Esophagus muscularis mucosa (tissue), 4 donors: ENCODE measurements at regions of chr3 and their contacts with region 1.

Region 1: DNA sequence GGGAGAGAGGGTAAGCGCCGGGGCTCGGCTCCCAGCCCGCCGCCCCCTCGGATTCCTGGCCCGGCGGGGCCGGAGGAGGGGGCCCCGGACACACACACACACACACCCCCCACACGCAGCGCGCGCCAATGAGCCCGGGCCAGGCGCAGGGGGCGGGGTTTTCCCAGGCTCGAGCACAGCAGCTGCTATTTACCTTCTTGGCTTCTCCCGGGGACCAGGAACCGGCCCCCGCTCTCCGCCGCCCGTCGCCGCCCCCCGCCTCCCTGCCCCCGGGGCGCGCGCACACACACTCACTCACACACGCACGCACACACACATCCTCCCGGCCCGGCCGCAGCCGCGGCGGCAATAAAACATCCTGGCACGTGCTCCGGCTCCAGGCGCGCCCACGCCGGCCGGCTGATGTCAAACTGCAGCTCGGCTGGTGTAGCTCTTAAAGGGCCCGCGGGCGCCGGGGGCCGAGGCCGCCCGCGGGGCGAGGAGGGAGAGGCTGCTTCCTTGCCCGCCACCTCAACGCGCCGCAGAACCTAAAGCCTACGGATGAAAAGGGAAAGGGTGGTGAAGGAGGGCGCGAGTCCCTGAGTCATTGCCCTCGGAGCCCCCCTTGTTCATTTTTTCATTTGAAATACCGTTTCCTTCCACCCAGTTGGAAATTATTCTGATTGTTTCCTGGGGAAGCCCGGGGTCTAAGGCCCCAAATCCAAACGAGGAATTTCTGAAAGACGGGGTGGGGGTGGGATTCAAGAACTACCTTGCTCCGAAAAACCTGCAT is 1.0 kb upstream of the HES1 start:
- DNase-seq: peak; percentile 97
- H3K4me3 ChIP-seq: peak overlapping the region; percentile 74 to 80 (median 76)
- H3K27ac ChIP-seq: peak overlapping the region; percentile 93 to 98 (median 96)
- H3K4me1 ChIP-seq: peaks cover 39 to 87% (median 74%) of the 10 kb centered on the region in 4 donors
- H3K27me3 ChIP-seq: no peaks in the 10 kb centered on the region
- CTCF ChIP-seq: no peak
- EP300 ChIP-seq: peak; percentile 26
- POLR2A ChIP-seq: peak; percentile 70

Region 2: GRCh38 chr3:193780810-193781472 is 354.0 kb before region 1 on chr3:
- intact Hi-C with region 1: loop called (anchors 2 kb)
- DNase-seq: no peak
- H3K4me3 ChIP-seq: no peak overlapping the region
- H3K27ac ChIP-seq: peak overlapping the region in 3 of 4 donors; percentile 34 to 49 (median 49)
- H3K4me1 ChIP-seq: peaks cover 8 to 15% (median 11%) of the 10 kb centered on the region in 4 donors
- H3K27me3 ChIP-seq: peaks cover 0 to 25% (median 0%) of the 10 kb centered on the region in 4 donors
- CTCF ChIP-seq: peak; percentile 79 to 86 (median 85)
- EP300 ChIP-seq: no peak
- POLR2A ChIP-seq: no peak

Region 3: DNA sequence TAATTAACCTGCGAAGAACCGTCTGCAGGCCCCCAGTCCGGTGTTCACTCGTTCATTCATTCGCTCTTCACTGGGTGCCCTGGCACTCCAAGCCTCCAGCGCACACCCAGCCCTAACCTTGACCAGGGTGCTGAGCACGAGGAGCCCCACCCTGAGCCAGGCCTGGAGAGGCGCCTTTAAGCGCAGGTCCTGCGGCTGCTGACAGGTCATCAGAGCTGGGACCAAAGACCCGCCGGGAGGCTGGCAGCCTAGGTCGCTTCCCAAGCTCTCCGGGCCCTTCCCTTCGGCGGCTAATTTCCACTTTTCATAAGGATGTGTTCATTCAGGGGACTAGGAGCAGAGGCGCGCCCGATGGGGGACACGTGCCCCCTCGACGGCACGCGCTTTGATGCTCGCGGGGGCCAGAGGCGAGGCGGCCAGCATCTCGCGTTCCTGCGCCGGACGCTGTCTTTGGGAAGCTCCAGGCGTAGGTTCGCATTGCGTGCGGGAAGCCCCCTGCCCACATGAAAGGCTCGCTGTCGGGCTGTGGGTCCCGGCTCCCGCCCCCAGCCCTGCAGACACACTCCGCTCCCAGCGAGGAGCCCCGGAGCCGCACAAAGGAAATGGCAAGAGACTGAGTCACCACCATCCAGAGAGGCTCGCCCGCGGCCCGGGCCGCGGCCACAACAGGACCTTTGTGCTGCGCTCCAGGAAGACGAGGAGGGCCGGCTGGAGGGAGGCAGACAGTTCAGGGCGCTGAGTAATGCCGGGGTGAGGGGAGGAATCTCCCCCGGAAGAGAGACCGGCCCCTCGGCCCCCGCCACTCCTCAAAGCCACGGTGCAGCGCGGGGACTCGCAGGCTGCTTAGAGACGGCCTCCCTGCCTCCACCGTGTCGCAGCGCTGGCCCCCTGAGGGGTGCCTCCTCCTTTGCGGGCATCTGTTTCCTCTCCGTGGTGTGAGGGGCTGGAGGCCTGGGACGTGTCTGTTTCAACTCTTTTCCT is 265.4 kb before region 1 on chr3:
- intact Hi-C with region 1: loop called (anchors 10 kb)
- DNase-seq: no peak
- H3K4me3 ChIP-seq: peak overlapping the region; percentile 5 to 24 (median 15)
- H3K27ac ChIP-seq: peak overlapping the region in 3 of 4 donors; percentile 13 to 51 (median 26)
- H3K4me1 ChIP-seq: peaks cover 22 to 57% (median 41%) of the 10 kb centered on the region in 4 donors
- H3K27me3 ChIP-seq: peaks cover 0 to 15% (median 3%) of the 10 kb centered on the region in 4 donors
- CTCF ChIP-seq: no peak
- EP300 ChIP-seq: no peak
- POLR2A ChIP-seq: no peak

Region 4: DNA sequence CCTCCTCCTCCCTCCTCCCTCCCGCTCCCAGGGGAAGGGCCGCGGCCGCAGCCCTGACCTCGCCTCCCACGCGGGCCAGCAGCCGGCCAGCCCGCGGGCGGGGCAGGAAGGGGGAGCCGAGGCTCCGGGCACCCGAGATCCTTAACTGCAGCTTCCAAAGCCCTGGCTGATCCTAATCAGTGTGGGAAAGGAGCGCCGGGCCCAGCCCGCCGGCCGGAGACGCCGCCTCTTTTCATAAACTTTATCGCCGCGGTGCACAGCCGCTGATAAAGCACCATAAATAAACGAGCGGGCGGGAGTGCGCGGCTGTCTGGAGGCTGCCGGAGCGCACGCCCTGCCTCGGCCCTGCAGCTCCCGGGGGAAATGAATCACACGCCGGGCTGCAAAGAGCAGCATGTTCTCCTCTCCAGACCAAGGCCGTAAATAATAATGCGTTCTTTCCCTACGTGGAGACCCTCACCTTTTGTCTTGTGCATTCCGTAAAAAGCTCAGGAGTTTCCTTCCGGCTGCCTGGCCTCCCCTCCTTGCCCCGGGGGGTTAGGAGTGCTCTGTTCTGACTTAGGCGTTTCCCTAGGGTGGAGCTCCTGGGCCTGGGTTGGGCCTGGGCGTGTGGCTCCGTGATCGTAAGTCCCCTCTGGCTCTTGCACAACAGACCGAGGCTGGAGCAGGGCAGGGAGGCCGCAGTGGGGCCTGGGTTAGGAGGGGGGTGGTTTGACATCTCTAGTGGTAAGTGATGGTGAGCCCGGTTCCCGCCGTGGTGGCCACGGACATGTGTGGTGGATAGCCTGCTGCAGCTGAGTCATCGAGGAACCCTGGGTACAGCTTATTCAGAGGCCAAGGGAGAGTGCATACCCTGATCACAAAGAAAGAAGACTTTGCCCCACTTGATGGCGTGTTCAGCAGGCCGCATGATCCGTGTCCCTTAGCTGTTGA is 131.6 kb before region 1 on chr3:
- intact Hi-C with region 1: loop called (anchors 2 kb)
- DNase-seq: peak; percentile 97
- H3K4me3 ChIP-seq: peak overlapping the region; percentile 54 to 58 (median 56)
- H3K27ac ChIP-seq: peak overlapping the region; percentile 75 to 82 (median 76)
- H3K4me1 ChIP-seq: peaks cover 23 to 38% (median 32%) of the 10 kb centered on the region in 4 donors
- H3K27me3 ChIP-seq: no peaks in the 10 kb centered on the region
- CTCF ChIP-seq: no peak
- EP300 ChIP-seq: no peak
- POLR2A ChIP-seq: no peak

Region 5: GRCh38 chr3:194070634-194071409 is 64.1 kb before region 1 on chr3:
- intact Hi-C with region 1: loop called (anchors 5 kb)
- DNase-seq: no peak
- H3K4me3 ChIP-seq: peak overlapping the region; percentile 60 to 74 (median 62)
- H3K27ac ChIP-seq: peak overlapping the region; percentile 78 to 88 (median 84)
- H3K4me1 ChIP-seq: peaks cover 18 to 23% (median 22%) of the 10 kb centered on the region in 4 donors
- H3K27me3 ChIP-seq: no peaks in the 10 kb centered on the region
- CTCF ChIP-seq: no peak
- EP300 ChIP-seq: no peak
- POLR2A ChIP-seq: no peak